ENCODE measurements at regions of chr3 and their contacts with region 1.

Region 1: DNA sequence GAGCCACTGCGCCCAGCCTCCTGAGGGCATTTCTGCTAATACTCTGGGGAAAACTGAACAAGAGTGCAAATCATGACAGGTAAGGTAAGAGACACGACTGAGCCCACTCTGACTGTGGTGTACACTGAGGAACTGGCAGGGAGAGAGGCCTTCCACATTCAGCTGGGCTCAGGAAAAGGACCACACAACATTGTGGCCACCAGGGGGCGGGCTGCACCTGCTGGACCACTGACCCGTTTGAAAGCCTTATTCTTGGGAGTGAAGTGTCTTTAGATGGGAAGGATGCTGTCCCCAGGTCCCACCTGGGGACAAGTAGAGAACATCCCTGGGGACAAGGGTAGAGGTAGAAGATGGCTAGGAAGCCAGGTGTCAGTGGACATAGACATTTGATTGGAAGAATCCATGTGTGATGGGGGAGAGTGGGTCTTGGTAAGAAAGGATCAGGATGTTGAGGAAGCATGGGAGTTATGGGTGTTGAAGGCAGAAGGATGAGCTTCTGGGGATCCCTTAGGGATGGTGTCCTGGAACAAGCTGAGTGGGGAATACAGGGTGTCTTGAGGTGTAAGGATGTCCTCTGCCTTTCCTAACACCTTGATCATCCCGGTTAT is 6.2 kb upstream of the CTDSPL start:
- DNase-seq: peak; percentile 89
- ATAC-seq: peak; percentile 53 to 56

Region 2: DNA sequence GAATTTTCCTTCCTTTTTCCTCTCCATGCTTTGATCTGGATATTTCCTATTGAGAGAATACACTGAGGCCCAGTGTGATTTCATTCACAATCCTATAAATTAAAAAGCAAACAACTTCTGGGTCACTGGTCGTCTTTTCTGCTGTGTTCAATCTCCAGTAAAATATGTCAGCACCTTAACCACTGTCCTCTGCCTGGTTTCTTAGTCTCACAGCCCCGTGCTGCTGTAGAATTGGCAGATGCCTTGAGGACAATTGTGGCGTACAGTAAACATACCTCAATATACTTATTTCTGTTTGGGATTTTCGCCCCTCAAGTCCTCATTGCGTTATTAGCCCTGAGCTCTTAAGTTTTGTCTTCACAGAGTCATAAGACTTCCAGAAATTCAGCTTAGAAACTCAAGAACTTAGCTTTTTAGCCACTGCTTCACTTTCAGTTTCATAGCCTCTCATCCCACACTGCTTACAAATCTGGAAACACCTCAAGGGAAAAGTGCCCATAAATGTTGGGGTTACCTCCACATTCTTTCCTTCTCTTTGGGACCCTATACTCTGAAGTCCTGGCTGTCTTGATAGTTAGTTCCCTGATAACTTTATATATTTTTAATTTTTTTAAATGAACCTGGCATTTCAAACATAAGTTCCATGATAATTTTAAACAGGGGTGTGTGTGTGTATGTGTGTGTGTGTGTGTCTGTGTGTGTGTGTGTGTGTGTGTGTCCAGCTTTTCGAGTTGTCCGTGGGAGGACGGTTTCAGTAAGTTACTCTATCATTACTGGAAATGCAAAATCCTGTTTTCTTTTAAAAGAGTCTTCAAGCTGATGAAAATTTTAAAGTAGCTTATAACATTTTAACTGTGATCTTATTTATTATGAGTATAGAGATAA is 232.2 kb before region 1 on chr3:
- intact Hi-C with region 1: no loop called
- DNase-seq: no peak
- ATAC-seq: no peak

Region 3: GRCh38 chr3:37967260-37967881 is 111.9 kb after region 1 on chr3:
- intact Hi-C with region 1: loop called (anchors 2 kb)
- DNase-seq: peak; percentile 75
- ATAC-seq: peak; percentile 74 to 84

Region 4: GRCh38 chr3:38004415-38005076 is 149.1 kb after region 1 on chr3:
- intact Hi-C with region 1: loop called in 1 of 2 experiments (anchors 10 kb)
- DNase-seq: peak; percentile 82
- ATAC-seq: peak; percentile 61 to 73

Measured in left cardiac atrium (tissue), 4 donors.